Sciatic nerve (tissue), 2 donors: ENCODE measurements at regions of chr11 and their contacts with region 1.

Region 1: DNA sequence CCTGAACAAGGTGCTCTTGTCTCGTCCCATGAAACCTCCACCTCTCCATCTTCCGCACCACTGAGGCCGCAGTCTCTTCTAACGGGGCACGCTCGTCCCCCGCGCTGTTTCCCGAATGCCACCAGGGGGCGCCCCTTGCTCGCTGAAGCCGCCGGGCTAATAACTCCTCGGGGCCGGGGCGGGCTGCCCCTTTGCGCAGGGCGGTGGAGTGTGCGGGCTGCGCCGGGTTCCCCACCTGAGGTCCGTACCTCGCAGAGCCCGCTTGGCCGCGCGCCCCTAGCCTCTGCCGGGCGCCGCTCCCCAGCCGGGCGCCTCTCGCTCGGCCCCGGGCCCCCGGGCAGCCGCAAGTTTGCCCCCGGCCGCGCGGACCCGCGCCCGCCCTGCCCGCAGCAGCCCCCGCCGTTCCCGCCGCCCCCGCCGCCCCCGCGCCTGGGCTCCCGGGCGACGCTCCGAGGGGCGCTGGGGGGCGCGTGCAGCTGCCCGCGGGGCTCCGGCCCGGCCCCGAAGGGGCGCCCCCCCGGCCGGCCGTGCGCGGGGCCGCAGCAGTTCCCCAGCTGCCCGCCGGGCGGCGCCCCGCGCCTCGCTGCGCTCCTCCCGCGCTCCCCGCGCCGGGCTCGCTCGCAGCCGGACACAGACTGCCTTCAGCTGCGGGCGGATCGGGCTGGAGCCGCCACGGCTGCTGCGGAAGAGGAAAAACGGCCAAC is at the start of gene GRIK4:
- DNase-seq: peak; percentile 93
- ATAC-seq: peak; percentile 93
- total RNA-seq, gene GRIK4: 0.27 TPM

Region 2: DNA sequence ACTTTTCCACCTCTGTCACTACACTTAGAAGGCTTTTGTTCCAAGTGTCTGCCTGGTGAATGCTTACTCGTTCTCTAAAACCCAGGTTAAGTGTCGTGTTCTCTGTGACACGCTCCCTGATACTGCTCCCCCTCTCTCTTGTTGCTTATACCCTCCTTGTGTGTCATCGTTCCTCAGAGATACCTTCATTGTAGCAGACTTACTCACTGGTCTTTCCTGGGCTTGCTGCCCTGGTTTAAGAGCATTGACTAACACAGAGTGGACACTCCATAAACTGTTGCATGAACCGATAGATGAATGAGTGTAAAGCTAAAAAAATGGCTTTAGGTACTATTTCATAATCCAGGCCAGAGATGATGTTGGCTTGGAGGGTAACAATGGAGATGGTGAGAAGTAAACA is 171.6 kb after region 1 on chr11:
- intact Hi-C with region 1: loop called (anchors 5 kb)
- DNase-seq: no peak
- ATAC-seq: no peak

Region 3: GRCh38 chr11:120807421-120808150 is 296.3 kb after region 1 on chr11:
- intact Hi-C with region 1: loop called (anchors 5 kb)
- DNase-seq: no peak
- ATAC-seq: no peak

Region 4: GRCh38 chr11:120952461-120953434 is 441.5 kb after region 1 on chr11:
- intact Hi-C with region 1: loop called (anchors 5 kb)
- DNase-seq: peak; percentile 84
- ATAC-seq: peak; percentile 92

Region 5: DNA sequence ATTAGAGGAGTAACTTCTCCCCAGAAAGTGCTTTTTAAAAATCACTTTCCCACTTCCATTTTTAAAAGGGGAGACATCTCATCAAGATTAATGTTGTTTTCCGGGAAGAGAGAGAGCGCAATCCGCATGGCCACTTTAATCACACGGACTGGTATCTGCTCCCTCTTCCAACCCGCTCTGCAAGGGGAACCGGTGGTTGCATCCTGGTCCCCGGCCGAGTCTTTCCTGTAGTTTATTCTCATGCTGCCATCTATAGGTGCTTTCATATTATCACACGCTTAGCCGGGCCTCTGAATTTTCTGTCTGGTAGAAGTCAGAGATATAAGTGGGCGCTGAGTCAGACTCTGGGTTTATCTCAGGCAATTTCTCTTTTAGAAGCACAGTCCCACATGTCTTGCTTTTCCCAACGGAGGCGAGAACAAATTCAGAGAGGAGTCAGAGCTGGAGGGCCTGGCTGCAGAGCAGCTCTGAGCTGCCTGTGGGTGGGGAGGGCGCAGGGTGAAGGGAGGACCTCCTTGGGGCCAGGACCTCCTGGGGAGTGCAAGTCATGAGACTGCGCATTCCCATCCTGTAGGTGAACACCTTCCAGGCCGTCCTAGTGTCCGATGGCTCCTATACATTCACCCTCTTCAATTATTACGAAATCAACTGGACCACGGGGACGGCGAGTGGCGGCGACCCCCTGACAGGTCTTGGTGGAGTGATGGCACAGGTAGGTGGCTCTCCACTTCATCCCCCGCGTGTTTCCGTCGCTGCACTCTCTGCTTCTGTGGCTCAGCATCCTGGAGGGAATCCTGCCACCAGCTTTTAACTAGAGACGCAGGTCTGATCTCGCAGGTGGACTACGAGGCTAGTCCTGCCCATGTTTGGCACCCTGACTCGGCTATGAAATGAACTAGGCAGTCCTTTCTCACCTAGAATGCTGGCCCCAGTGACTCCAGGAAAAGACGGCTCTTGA is 601.5 kb after region 1 on chr11:
- intact Hi-C with region 1: loop called (anchors 10 kb)
- DNase-seq: peak; percentile 71
- ATAC-seq: peak; percentile 89